ENCODE measurements at regions of chr19 and their contacts with region 1.

Region 1: DNA sequence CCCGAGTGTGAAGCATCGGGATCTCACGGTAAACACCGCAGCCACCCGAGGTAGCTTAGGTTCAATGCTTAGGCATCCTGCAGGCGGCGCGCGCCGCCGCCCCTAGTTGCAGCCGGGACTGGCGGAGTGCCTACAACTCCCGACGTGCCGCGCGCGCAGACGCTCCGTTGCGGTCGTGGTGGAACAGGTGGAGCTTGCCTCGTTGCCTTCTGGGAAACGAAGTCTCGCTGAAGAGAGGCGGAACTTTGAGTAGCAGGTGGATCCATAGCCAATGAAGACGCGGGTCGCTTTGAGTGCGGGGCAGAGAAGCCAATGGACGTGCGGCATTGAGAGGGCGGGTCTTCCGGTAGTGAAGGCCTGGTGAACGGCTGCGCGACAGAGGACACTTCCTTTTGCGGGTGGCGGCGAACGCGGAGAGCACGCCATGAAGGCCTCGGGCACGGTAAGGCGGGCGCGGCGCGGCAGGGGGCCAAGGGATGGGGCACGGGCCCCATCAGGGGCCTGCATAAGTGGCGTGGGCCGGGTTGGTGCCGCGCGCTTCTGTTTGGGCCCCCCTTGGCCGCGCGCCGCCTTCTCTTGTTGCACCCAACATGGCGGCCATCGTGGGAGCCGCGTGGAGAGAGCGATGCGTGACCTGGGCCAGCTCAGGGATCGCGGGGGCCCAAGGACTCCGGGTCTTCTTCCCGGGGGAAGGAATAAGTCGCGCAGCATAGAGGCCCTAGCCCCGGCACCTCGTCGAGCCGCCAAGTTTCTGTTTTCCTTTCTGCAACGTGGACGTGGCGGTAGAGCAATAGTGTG is at the start of gene RPL18A:
- DNase-seq: peak; percentile 99
- ATAC-seq: peak; percentile 91
- H3K4me3 ChIP-seq: peak within 1 kb of the TSS; percentile 91 to 97 (median 96)
- H3K27ac ChIP-seq: peak within 1 kb of the TSS; percentile 82
- H3K4me1 ChIP-seq: peaks cover 18% of the 10 kb centered on the region
- H3K27me3 ChIP-seq: no peaks in the 10 kb centered on the region; a peak in 1 of 5 replicates
- CTCF ChIP-seq: peak; percentile 97
- EP300 ChIP-seq: peak in 1 of 2 experiments; percentile 4; a peak in 1 of 4 replicates
- POLR2A ChIP-seq: peak; percentile 97
- RAD21 ChIP-seq: peak; percentile 31; the same call in 1 of the 2 replicates
- total RNA-seq, gene RPL18A: 1,471 and 1,490 TPM in 2 replicates

Region 2: GRCh38 chr19:17703824-17704463 is 155.8 kb before region 1 on chr19:
- CTCF ChIA-PET with region 1: interaction called, 3 read pairs
- POLR2A ChIA-PET with region 1: no interaction called
- in situ Hi-C with region 1: loop called (anchors 10 kb)
- intact Hi-C with region 1: no loop called
- DNase-seq: peak; percentile 33
- ATAC-seq: peak; percentile 67
- H3K4me3 ChIP-seq: no peak overlapping the region
- H3K27ac ChIP-seq: no peak overlapping the region
- H3K4me1 ChIP-seq: no peaks in the 10 kb centered on the region
- H3K27me3 ChIP-seq: peaks cover 2 to 8% of the 10 kb centered on the region in 2 experiments; a peak in 3 of 5 replicates
- CTCF ChIP-seq: peak; percentile 82
- EP300 ChIP-seq: no peak
- POLR2A ChIP-seq: no peak
- RAD21 ChIP-seq: peak; percentile 48; the same call in 1 of the 2 replicates

Region 3: DNA sequence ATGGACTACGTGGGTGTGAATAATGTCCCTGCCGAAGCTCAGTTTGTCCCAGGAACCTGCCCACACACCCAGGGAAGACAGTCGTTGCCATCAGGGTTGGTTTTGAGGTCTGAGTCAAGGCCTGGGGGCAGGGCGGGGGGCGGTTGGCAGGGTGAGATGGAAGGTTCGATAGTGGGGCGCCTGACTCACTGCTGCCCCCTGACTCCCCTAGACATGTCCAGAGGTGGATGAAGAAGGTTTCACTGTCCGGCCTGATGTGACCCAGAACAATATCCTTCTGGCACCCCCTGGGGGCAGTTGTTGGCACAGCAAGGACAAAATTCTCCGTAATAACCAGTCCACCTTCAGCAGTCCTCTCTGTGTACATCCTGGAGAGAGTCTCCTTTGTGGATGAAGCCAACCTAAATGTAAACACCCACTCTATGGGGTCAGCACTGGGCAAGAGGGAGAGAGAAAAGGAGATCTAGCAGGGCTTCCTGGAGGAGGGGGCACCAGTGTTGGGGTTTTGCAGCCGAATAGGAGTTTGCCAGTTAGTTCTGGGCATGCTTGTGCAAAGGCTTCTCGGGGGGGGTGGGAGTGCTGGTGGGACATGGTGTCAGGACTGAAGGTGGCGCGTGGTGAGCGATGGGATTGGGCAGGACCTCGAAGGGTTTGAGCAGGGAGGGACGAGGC is 84.4 kb before region 1 on chr19:
- CTCF ChIA-PET with region 1: no interaction called
- POLR2A ChIA-PET with region 1: no interaction called
- in situ Hi-C with region 1: no loop called
- intact Hi-C with region 1: loop called (anchors 1 kb)
- DNase-seq: peak; percentile 64
- ATAC-seq: peak; percentile 79
- H3K4me3 ChIP-seq: no peak overlapping the region
- H3K27ac ChIP-seq: no peak overlapping the region
- H3K4me1 ChIP-seq: peaks cover 8% of the 10 kb centered on the region; the same call in 1 of the 2 replicates
- H3K27me3 ChIP-seq: no peaks in the 10 kb centered on the region
- CTCF ChIP-seq: peak; percentile 87
- EP300 ChIP-seq: no peak
- POLR2A ChIP-seq: no peak
- RAD21 ChIP-seq: peak; percentile 72

Region 4: GRCh38 chr19:17834350-17835181 is 25.2 kb before region 1 on chr19:
- CTCF ChIA-PET with region 1: no interaction called
- POLR2A ChIA-PET with region 1: interaction called, 4 read pairs
- in situ Hi-C with region 1: no loop called
- intact Hi-C with region 1: loop called (anchors 2 kb)
- DNase-seq: no peak
- ATAC-seq: peak; percentile 64
- H3K4me3 ChIP-seq: no peak overlapping the region
- H3K27ac ChIP-seq: no peak overlapping the region
- H3K4me1 ChIP-seq: no peaks in the 10 kb centered on the region
- H3K27me3 ChIP-seq: no peaks in the 10 kb centered on the region
- CTCF ChIP-seq: no peak
- EP300 ChIP-seq: no peak
- POLR2A ChIP-seq: no peak
- RAD21 ChIP-seq: no peak

Region 5: DNA sequence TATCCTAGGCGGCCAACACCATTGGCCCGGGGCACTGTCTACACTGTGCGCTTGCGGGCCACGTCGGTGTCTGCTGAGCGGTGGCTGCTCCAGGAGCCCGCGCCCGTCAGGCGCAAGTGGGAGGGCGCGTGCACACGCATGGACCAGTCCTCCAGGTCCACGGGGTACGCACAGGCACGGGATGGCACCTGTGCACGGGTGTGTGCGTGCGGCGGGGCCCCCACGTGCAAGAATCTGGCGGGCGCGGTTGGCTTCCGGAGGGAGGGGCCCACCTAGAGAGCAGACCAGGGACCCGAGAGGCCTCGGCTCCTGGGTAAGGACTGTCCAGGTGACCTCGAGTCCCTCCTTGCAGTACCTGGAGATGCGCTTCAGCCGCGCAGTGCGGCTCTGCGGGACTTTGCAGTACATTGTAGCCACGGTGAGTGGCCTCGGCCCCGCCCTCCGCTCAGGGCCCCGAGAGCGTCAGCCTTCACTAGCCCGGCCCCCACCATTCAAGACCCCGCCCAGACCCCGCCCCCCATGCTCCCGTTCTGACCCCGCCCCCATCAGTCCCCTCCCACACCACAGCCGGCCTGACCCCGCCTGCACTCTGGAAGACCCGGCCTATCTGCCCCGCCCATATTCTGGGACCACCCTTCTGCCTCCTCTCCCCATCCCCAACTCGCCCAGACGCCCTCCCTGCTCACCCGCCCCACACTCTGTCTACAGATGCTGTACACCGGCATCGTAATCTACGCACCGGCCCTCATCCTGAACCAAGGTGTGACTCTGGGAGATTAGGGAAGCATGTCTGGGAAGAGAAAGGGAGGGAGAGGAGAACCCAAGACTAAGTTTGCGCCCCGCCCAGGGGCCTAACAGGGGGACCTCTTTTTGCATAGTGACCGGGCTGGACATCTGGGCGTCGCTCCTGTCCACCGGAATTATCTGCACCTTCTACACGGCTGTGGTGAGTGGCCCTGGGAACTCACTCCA is 14.3 kb after region 1 on chr19:
- CTCF ChIA-PET with region 1: no interaction called
- POLR2A ChIA-PET with region 1: interaction called, 26 read pairs
- in situ Hi-C with region 1: no loop called
- intact Hi-C with region 1: no loop called
- DNase-seq: no peak
- ATAC-seq: peak; percentile 50
- H3K4me3 ChIP-seq: peak overlapping the region; percentile 15 to 64 (median 22); a peak in 2 of 6 replicates
- H3K27ac ChIP-seq: no peak overlapping the region
- H3K4me1 ChIP-seq: peaks cover 6% of the 10 kb centered on the region
- H3K27me3 ChIP-seq: peaks cover 5 to 33% of the 10 kb centered on the region in 2 experiments
- CTCF ChIP-seq: no peak
- EP300 ChIP-seq: no peak
- POLR2A ChIP-seq: no peak
- RAD21 ChIP-seq: no peak

Measured in HepG2 (cell line).